Common myeloid progenitor, CD34-positive (primary cell): ENCODE measurements at regions of chr3 and their contacts with region 1.

Region 1: GRCh38 chr3:149771652-149772271 is 19.5 kb upstream of the COMMD2 start:
- DNase-seq: peak; percentile 46 to 59 (median 46)
- H3K4me3 ChIP-seq: no peak overlapping the region
- H3K27ac ChIP-seq: no peak overlapping the region
- H3K4me1 ChIP-seq: no peaks in the 10 kb centered on the region
- H3K27me3 ChIP-seq: no peaks in the 10 kb centered on the region

Region 2: GRCh38 chr3:149566292-149566975 is 205.3 kb before region 1 on chr3:
- CTCF ChIA-PET with region 1: interaction called, 16 read pairs
- POLR2A ChIA-PET with region 1: no interaction called
- DNase-seq: no peak
- H3K4me3 ChIP-seq: no peak overlapping the region
- H3K27ac ChIP-seq: no peak overlapping the region
- H3K4me1 ChIP-seq: no peaks in the 10 kb centered on the region
- H3K27me3 ChIP-seq: peaks cover 0 to 2% (median 0%) of the 10 kb centered on the region in 5 experiments

Region 3: GRCh38 chr3:149752051-149752787 is 19.5 kb before region 1 on chr3 and contains the start of gene COMMD2:
- CTCF ChIA-PET with region 1: interaction called, 12 read pairs
- POLR2A ChIA-PET with region 1: interaction called, 4 read pairs
- DNase-seq: peak; percentile 81 to 85 (median 84)
- H3K4me3 ChIP-seq: peak within 1 kb of the TSS; percentile 72 to 98 (median 95)
- H3K27ac ChIP-seq: peak within 1 kb of the TSS; percentile 2 to 79
- H3K4me1 ChIP-seq: peaks cover 4 to 18% (median 5%) of the 10 kb centered on the region in 4 experiments
- H3K27me3 ChIP-seq: no peaks in the 10 kb centered on the region

Region 4: DNA sequence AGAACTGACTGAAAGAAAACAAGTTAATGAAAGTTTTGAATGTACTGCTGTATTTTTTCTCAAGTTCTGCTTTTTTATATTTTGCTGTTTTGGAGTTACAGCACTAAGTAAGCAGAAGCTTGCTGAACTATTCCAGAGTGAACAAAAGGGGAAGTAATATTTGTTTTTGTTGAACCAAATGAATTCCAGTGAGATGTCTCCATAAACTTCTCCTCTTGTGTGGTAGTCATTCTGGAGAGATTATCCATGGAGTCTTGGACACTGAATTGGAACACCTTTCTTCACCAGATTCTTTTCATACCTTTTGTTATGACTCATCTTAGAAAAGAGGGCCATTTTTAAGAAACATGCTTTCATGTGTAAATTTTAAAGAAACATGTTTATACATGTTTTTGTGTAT is 11.8 kb after region 1 on chr3:
- CTCF ChIA-PET with region 1: interaction called, 22 read pairs
- POLR2A ChIA-PET with region 1: no interaction called
- DNase-seq: peak; percentile 54 to 87 (median 76)
- H3K4me3 ChIP-seq: peak overlapping the region in 2 of 7 experiments; percentile 4 to 19
- H3K27ac ChIP-seq: peak overlapping the region in 1 of 2 experiments; percentile 57
- H3K4me1 ChIP-seq: peaks cover 17 to 40% (median 26%) of the 10 kb centered on the region in 4 experiments
- H3K27me3 ChIP-seq: no peaks in the 10 kb centered on the region

Region 5: DNA sequence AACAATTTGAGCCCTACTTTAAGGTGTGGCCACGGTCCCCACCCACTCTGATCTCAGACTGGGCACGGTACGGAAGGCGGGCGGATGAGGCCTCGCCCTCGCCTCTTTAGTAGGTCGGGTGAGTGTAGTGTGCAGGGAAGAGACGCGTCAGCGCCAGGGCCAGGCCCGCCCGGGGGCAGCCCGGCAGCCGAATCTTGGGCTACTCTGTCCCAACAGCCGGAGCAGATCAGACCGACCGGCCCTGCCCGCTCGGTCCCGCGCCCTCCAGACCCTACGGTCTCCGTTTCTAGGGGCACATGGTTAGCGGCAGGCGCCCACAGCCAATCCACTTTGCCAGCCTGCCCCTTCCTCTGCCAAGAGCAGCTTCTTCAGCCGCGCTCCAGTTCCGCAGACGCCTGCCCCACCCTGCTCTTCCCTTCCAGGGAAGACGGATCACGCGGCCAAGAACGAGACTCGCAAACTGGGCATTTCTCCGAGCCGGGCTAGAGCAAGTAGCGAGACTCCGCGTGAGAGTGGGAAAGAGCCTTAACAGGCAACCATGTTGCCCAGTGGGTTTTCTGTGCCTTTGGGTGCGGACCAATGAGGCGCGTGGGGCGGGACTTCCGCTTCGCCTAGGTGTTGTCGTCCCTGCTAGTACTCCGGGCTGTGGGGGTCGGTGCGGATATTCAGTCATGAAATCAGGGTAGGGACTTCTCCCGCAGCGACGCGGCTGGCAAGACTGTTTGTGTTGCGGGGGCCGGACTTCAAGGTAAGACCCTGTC is 41.0 kb after region 1 on chr3 and contains the start of gene RNF13:
- CTCF ChIA-PET with region 1: interaction called, 125 read pairs
- POLR2A ChIA-PET with region 1: no interaction called
- DNase-seq: peak; percentile 95 to 96 (median 95)
- H3K4me3 ChIP-seq: peak within 1 kb of the TSS; percentile 84 to 99 (median 96)
- H3K27ac ChIP-seq: peak within 1 kb of the TSS; percentile 80 to 88
- H3K4me1 ChIP-seq: peaks cover 19 to 50% (median 32%) of the 10 kb centered on the region in 4 experiments
- H3K27me3 ChIP-seq: no peaks in the 10 kb centered on the region

Region 6: DNA sequence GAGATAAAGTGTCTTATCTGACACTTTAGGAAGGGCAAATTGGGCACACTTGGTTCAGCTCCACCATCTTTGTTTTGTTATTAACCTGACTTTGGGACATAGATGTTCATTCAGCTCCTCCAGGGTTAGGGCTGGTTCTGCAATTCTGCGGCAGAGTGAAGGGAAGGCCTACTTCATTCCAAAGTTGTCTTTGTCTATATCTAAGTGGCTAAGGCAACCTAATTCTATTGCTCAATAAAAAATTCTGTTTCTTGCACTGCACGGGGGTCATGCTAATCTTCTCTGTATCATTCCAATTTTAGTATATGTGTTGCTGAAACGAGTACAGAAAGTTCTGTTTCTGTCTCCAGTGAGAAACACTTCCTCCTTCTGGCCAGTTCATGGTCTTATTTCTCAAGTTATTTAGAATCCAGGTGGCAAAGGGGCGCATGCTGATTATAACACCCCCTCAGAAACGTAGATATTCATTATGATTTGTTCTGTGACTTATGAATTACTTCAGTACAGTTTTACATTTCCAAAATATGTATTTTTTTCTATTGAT is 145.4 kb after region 1 on chr3:
- CTCF ChIA-PET with region 1: no interaction called
- POLR2A ChIA-PET with region 1: no interaction called
- DNase-seq: no peak
- H3K4me3 ChIP-seq: no peak overlapping the region
- H3K27ac ChIP-seq: no peak overlapping the region
- H3K4me1 ChIP-seq: no peaks in the 10 kb centered on the region
- H3K27me3 ChIP-seq: no peaks in the 10 kb centered on the region